Left cardiac atrium (tissue), 4 donors: ENCODE measurements at regions of chr4 and their contacts with region 1.

Region 1: GRCh38 chr4:89307446-89308160 is at the start of gene GPRIN3:
- DNase-seq: peak; percentile 61
- ATAC-seq: peak; percentile 76 to 83
- total RNA-seq, gene GPRIN3: 5.3 to 5.7 TPM

Region 2: DNA sequence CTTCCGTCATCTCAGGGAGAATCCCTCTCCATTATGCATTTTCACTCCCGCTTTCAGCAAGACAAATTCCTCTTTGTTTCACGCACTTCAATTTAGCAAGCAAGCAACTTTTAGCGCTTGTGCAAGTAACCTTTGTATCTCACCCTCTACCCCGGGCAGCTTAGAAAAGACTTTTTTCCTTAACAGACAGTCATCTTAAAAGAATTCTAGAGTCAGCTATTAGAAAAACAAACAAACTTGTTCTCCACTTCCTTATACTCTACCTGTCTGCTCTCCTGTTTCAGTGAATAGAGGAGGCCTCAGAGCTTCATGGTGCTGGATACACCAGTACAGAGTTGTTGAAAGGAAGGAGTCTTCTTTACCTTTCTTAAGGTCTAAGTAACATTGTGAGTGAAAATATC is 184.2 kb before region 1 on chr4:
- intact Hi-C with region 1: no loop called
- DNase-seq: no peak
- ATAC-seq: no peak

Region 3: DNA sequence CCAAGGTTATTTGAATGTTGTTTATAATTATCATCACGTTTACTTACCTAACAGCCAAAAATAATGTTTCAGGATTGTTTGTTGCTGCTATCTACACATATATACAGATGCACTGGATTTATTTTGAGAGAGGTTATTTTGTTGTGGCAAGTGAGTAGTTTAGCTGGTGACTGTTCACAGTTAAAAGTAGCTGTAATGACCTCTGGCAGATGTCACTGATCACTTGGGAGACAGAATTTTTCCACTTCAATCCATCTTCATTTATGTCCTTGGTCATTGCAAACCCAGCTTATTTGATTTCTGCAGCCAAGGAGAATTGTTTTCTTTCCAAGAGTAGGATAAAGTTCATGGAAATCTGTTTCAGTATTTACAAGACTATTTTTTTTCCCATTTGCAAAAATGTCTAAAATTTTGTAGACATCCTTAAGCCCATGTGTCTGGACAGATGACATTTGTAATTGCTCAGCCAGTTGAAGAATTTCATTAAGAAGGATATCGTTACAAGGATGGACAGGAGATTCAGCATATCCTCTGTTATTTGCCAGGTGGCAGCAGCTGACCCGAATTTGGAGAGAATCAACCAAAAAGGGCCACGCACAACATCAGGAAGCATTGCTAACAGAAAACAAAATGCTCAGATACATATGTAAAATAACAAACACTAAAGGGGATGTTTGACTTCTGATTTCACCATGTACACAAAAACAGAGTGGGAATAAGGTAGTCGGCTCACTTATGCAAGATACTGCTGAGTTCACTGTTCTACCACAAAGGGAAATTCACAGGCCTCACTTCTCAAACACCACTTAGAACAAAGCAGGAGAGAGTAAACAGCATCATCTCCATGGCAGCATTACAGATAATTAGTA is 64.5 kb before region 1 on chr4:
- intact Hi-C with region 1: loop called in 1 of 2 experiments (anchors 5 kb)
- DNase-seq: no peak
- ATAC-seq: peak in 1 of 2 donors; percentile 30

Region 4: GRCh38 chr4:89254847-89255246 is 52.8 kb before region 1 on chr4:
- intact Hi-C with region 1: loop called in 1 of 2 experiments (anchors 5 kb)
- DNase-seq: no peak
- ATAC-seq: peak in 1 of 2 donors; percentile 54

Region 5: GRCh38 chr4:89410687-89411086 is 103.1 kb after region 1 on chr4:
- intact Hi-C with region 1: loop called in 1 of 2 experiments (anchors 5 kb)
- DNase-seq: no peak
- ATAC-seq: peak in 1 of 2 donors; percentile 70